PC-3 (cell line): ENCODE measurements at regions of chr2 and their contacts with region 1.

Region 1: GRCh38 chr2:141611-142010 is 95.3 kb upstream of the FAM110C start:
- DNase-seq: no peak
- ATAC-seq: no peak
- H3K4me3 ChIP-seq: no peak overlapping the region
- H3K27ac ChIP-seq: no peak overlapping the region
- H3K4me1 ChIP-seq: no peaks in the 10 kb centered on the region
- H3K27me3 ChIP-seq: peaks cover 6% of the 10 kb centered on the region; the same call in 1 of the 2 replicates
- CTCF ChIP-seq: no peak

Region 2: GRCh38 chr2:44748-45341 is 96.8 kb before region 1 on chr2:
- CTCF ChIA-PET with region 1: no interaction called
- POLR2A ChIA-PET with region 1: no interaction called
- intact Hi-C with region 1: loop called (anchors 1 kb)
- DNase-seq: peak; percentile 35
- ATAC-seq: peak; percentile 28
- H3K4me3 ChIP-seq: peak overlapping the region; percentile 83
- H3K27ac ChIP-seq: no peak overlapping the region
- H3K4me1 ChIP-seq: peaks cover 37% of the 10 kb centered on the region
- H3K27me3 ChIP-seq: no peaks in the 10 kb centered on the region
- CTCF ChIP-seq: no peak